ENCODE measurements at regions of chr15 and their contacts with region 1.

Region 1: GRCh38 chr15:31265871-31266711 is 60.5 kb upstream of the KLF13 start:
- DNase-seq: peak; percentile 76 to 84 (median 80)
- H3K4me3 ChIP-seq: peak overlapping the region in 1 of 2 donors; percentile 20
- H3K4me3 Mint-ChIP-seq: peak overlapping the region; percentile 1 to 86 (median 78)
- H3K27ac ChIP-seq: peak overlapping the region; percentile 70
- H3K27ac Mint-ChIP-seq: peak overlapping the region; percentile 70 to 99 (median 96)
- H3K4me1 ChIP-seq: peaks cover 75% of the 10 kb centered on the region
- H3K4me1 Mint-ChIP-seq: peaks cover 62 to 83% (median 74%) of the 10 kb centered on the region in 4 donors
- H3K27me3 ChIP-seq: no peaks in the 10 kb centered on the region
- H3K27me3 Mint-ChIP-seq: no peaks in the 10 kb centered on the region

Region 2: GRCh38 chr15:31179693-31180092 is 86.4 kb before region 1 on chr15:
- CTCF ChIA-PET with region 1: no interaction called
- POLR2A ChIA-PET with region 1: no interaction called
- intact Hi-C with region 1: no loop called
- DNase-seq: peak in 4 of 5 donors; percentile 9 to 50 (median 25)
- H3K4me3 ChIP-seq: no peak overlapping the region
- H3K4me3 Mint-ChIP-seq: peak overlapping the region; percentile 8 to 88 (median 64)
- H3K27ac ChIP-seq: no peak overlapping the region
- H3K27ac Mint-ChIP-seq: peak overlapping the region in 6 of 7 donors; percentile 57 to 90 (median 82)
- H3K4me1 ChIP-seq: peaks cover 23% of the 10 kb centered on the region
- H3K4me1 Mint-ChIP-seq: peaks cover 11 to 20% (median 16%) of the 10 kb centered on the region in 4 donors
- H3K27me3 ChIP-seq: no peaks in the 10 kb centered on the region
- H3K27me3 Mint-ChIP-seq: no peaks in the 10 kb centered on the region

Region 3: GRCh38 chr15:31200735-31201151 is 65.3 kb before region 1 on chr15:
- CTCF ChIA-PET with region 1: interaction called, 14 read pairs
- POLR2A ChIA-PET with region 1: interaction called, 4 read pairs
- intact Hi-C with region 1: no loop called
- DNase-seq: peak; percentile 70 to 73 (median 71)
- H3K4me3 ChIP-seq: no peak overlapping the region
- H3K4me3 Mint-ChIP-seq: peak overlapping the region in 2 of 8 donors; percentile 20 to 26
- H3K27ac ChIP-seq: no peak overlapping the region
- H3K27ac Mint-ChIP-seq: peak overlapping the region in 4 of 7 donors; percentile 18 to 87 (median 38)
- H3K4me1 ChIP-seq: peaks cover 26% of the 10 kb centered on the region
- H3K4me1 Mint-ChIP-seq: peaks cover 9 to 30% (median 15%) of the 10 kb centered on the region in 4 donors
- H3K27me3 ChIP-seq: no peaks in the 10 kb centered on the region
- H3K27me3 Mint-ChIP-seq: no peaks in the 10 kb centered on the region

Region 4: GRCh38 chr15:31215490-31216214 is 50.4 kb before region 1 on chr15:
- CTCF ChIA-PET with region 1: interaction called, 26 read pairs
- POLR2A ChIA-PET with region 1: interaction called, 61 read pairs
- intact Hi-C with region 1: loop called (anchors 1 kb)
- DNase-seq: peak; percentile 70 to 76 (median 72)
- H3K4me3 ChIP-seq: peak overlapping the region in 1 of 2 donors; percentile 38
- H3K4me3 Mint-ChIP-seq: peak overlapping the region; percentile 54 to 76 (median 73)
- H3K27ac ChIP-seq: peak overlapping the region; percentile 52
- H3K27ac Mint-ChIP-seq: peak overlapping the region in 6 of 7 donors; percentile 32 to 87 (median 78)
- H3K4me1 ChIP-seq: peaks cover 30% of the 10 kb centered on the region
- H3K4me1 Mint-ChIP-seq: peaks cover 18 to 34% (median 28%) of the 10 kb centered on the region in 4 donors
- H3K27me3 ChIP-seq: no peaks in the 10 kb centered on the region
- H3K27me3 Mint-ChIP-seq: no peaks in the 10 kb centered on the region

Region 5: DNA sequence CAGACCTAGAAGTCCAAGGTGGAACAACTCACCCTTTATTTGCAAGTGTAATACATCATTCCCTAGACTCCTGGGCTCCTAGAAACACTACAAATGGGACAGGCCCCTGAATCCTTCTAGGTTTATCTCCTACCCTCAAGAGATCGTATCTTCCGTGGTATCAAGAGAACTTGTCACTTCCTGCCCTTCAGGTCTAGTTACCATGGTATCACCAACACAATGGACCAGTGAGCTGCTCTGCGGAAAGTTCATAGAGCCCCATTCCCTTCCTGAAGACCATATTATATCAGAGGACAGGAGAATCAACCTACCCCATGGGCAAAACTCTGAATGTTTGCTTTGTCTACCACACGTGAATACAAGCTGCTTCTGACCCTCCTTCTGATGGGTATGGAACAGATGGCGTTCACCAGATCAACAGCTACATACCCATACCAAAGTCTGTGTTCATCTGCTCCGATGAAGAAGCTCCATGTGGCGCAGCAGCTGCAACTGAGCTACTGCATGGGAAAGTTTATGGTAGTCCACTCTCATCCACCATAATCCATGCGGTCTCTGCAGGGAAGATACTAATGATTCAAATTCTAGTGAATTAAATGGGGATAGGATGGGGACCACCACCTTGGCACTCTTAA is 24.1 kb before region 1 on chr15:
- CTCF ChIA-PET with region 1: interaction called, 7 read pairs
- POLR2A ChIA-PET with region 1: interaction called, 34 read pairs
- intact Hi-C with region 1: loop called (anchors 1 kb)
- DNase-seq: peak in 4 of 5 donors; percentile 54 to 83 (median 74)
- H3K4me3 ChIP-seq: no peak overlapping the region
- H3K4me3 Mint-ChIP-seq: peak overlapping the region in 5 of 8 donors; percentile 41 to 73 (median 63)
- H3K27ac ChIP-seq: peak overlapping the region; percentile 0
- H3K27ac Mint-ChIP-seq: peak overlapping the region in 6 of 7 donors; percentile 79 to 98 (median 94)
- H3K4me1 ChIP-seq: peaks cover 29% of the 10 kb centered on the region
- H3K4me1 Mint-ChIP-seq: peaks cover 24 to 50% (median 35%) of the 10 kb centered on the region in 4 donors
- H3K27me3 ChIP-seq: no peaks in the 10 kb centered on the region
- H3K27me3 Mint-ChIP-seq: no peaks in the 10 kb centered on the region

Region 6: DNA sequence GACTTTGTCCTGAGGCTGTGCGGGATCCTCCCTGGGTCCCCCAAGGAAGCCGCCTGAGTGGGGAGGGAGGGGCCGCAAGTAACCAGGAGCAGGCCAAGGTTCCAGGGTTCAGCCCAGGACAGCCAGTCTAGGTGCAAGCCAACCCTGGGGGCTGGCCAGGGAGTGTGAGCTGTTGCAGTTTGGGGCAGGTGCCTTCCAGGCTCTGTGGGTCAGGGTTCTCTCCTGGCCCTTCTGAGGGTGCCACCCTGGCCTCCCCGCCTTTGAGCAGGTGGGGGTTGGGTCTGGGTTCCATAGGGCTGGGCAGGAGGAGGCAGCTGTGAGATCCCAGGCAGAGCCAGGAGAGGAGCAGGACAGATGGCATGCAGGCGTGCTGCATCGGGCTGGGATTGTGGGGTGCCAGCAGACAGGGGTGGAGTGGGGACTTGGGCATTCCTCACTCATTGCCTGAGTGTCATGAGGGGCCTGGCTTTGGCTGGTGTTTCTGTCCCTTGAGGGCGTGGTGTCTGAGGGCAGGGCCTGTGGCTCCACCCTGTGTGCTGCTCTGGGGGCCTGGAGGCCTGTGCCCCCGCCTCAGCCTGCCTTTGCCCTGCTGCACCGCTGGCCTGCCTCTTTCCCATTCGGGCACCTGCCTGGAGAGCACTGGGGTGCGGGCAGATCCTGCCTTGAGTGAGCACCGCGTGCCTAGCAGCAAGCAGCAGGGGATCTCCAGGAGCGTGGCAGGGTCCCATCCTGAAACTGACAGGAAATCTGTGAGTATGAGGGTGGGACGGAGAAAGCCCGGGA is 78.9 kb after region 1 on chr15:
- CTCF ChIA-PET with region 1: interaction called, 4 read pairs
- POLR2A ChIA-PET with region 1: interaction called, 19 read pairs
- intact Hi-C with region 1: no loop called
- DNase-seq: peak in 1 of 5 donors; percentile 47
- H3K4me3 ChIP-seq: peak overlapping the region; percentile 54 to 60
- H3K4me3 Mint-ChIP-seq: peak overlapping the region; percentile 83 to 95 (median 90)
- H3K27ac ChIP-seq: peak overlapping the region; percentile 74
- H3K27ac Mint-ChIP-seq: peak overlapping the region; percentile 84 to 99 (median 98)
- H3K4me1 ChIP-seq: peaks cover 100% of the 10 kb centered on the region
- H3K4me1 Mint-ChIP-seq: peaks cover 70 to 100% (median 91%) of the 10 kb centered on the region in 4 donors
- H3K27me3 ChIP-seq: no peaks in the 10 kb centered on the region
- H3K27me3 Mint-ChIP-seq: no peaks in the 10 kb centered on the region

Region 7: DNA sequence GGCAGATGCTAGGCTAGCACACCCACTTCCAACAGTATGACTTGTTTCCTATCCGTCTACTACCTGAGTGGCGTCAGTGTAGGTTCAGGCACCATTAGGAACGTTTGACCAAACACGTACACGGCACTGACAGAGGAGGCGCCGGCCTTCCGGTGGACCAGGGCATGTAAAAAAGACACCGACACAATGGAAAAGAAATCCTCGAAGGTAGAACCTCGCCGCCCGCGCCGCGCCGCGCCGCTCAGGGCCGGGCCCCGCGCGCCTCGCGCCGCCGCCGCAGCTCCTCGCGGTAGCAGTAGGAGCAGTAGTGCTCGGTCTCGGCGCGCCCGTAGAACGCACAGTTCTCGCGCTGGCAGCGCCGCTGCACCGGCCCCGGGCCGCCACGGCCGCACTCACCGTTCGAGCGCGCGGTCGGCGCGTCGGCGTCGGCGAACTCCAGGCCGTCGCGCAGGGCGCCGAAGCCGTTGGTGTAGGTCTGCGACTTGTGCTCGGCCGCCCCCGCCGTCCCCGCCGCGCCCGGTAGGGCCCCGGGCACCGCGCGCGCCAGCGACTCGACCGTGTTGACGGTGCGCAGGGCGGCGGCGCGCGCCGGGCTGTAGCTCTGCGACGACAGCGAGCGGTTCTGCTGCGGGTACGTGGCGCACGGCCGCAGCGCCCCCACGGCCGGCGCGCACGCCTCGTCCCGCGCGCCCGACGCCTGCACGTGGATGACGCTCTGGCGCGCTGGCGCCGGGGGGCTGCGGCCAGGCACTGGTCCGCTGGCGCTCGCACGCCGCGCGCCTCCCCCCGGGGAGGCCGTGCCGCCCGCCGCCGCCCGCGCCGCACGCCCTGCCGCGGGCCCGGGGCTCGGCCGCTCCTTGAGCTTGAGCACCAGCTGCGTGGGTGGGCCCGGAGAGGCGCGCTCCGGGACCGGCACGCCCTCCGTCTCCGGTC is 217.2 kb after region 1 on chr15:
- CTCF ChIA-PET with region 1: interaction called, 46 read pairs
- POLR2A ChIA-PET with region 1: interaction called, 20 read pairs
- intact Hi-C with region 1: loop called (anchors 1 kb)
- DNase-seq: peak; percentile 48 to 64 (median 56)
- H3K4me3 ChIP-seq: peak overlapping the region in 1 of 2 donors; percentile 29
- H3K4me3 Mint-ChIP-seq: peak overlapping the region; percentile 91 to 96 (median 96)
- H3K27ac ChIP-seq: no peak overlapping the region
- H3K27ac Mint-ChIP-seq: peak overlapping the region; percentile 75 to 97 (median 92)
- H3K4me1 ChIP-seq: peaks cover 46% of the 10 kb centered on the region
- H3K4me1 Mint-ChIP-seq: peaks cover 21 to 69% (median 39%) of the 10 kb centered on the region in 4 donors
- H3K27me3 ChIP-seq: no peaks in the 10 kb centered on the region
- H3K27me3 Mint-ChIP-seq: no peaks in the 10 kb centered on the region